MCF 10A (cell line): ENCODE measurements at regions of chr1 and their contacts with region 1.

Region 1: GRCh38 chr1:93814059-93814794 is 64.8 kb downstream of the DNTTIP2 start:
- DNase-seq: peak; percentile 90
- H3K4me3 Mint-ChIP-seq: no peak overlapping the region
- H3K27ac Mint-ChIP-seq: no peak overlapping the region
- H3K4me1 Mint-ChIP-seq: peaks cover 52% of the 10 kb centered on the region
- H3K27me3 Mint-ChIP-seq: no peaks in the 10 kb centered on the region
- CTCF ChIP-seq: peak; percentile 97

Region 2: GRCh38 chr1:93579891-93580290 is 234.3 kb before region 1 on chr1:
- CTCF ChIA-PET with region 1: interaction called, 10 read pairs
- POLR2A ChIA-PET with region 1: interaction called, 5 read pairs
- intact Hi-C with region 1: no loop called
- DNase-seq: peak; percentile 45
- H3K4me3 Mint-ChIP-seq: no peak overlapping the region
- H3K27ac Mint-ChIP-seq: peak overlapping the region; percentile 71
- H3K4me1 Mint-ChIP-seq: peaks cover 16% of the 10 kb centered on the region
- H3K27me3 Mint-ChIP-seq: no peaks in the 10 kb centered on the region
- CTCF ChIP-seq: no peak

Region 3: DNA sequence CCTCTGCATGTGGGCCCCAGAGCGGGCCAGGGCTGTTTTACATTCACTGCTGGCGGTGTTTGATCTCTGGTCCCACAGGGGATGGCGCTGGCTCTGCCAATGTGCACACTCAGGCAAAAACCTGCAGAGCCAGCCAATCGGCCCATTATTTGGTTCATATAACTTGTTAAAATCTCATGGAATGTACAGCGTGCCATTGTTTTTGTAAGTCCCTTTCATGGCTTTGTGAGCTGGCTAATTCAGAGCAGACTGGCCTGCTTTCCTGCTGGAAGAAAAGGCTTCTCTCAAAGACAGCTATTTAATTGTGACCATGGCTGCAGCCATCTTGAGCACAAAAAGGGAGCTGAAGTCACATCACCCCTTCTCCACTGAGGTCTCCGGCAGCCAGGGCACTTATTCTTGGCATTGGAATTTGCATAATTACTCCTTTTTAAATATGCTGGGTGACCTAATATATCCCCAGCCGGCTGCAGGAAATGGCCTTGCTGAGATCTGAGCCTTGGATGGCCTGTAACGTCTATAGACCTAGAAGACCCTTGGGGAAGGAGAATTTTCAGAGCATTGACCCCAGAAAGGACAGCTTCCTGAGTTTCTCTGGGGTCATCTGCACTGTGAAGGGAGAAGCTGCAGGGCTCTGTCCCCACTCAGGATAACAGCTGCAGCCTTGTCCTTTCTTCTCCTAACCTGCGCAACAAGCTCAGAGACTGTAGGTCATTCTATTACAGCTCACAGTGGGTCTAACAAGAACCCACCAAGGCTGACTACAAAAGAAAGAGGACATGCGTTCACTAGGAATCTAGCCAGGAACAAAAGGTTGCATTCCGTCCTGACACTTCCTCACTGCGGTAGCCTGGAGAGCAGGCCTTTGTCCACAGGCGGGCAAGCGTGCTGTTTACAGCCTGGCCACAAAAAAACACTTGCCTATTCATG is 178.3 kb before region 1 on chr1:
- CTCF ChIA-PET with region 1: interaction called, 250 read pairs
- POLR2A ChIA-PET with region 1: interaction called, 156 read pairs
- intact Hi-C with region 1: no loop called
- DNase-seq: no peak
- H3K4me3 Mint-ChIP-seq: no peak overlapping the region
- H3K27ac Mint-ChIP-seq: no peak overlapping the region
- H3K4me1 Mint-ChIP-seq: peaks cover 5% of the 10 kb centered on the region
- H3K27me3 Mint-ChIP-seq: no peaks in the 10 kb centered on the region
- CTCF ChIP-seq: no peak

Region 4: GRCh38 chr1:93686497-93687250 is 127.6 kb before region 1 on chr1:
- CTCF ChIA-PET with region 1: interaction called, 29 read pairs
- POLR2A ChIA-PET with region 1: interaction called, 62 read pairs
- intact Hi-C with region 1: loop called (anchors 1 kb)
- DNase-seq: no peak
- H3K4me3 Mint-ChIP-seq: no peak overlapping the region
- H3K27ac Mint-ChIP-seq: no peak overlapping the region
- H3K4me1 Mint-ChIP-seq: no peaks in the 10 kb centered on the region
- H3K27me3 Mint-ChIP-seq: no peaks in the 10 kb centered on the region
- CTCF ChIP-seq: no peak

Region 5: GRCh38 chr1:93749894-93750301 is 64.3 kb before region 1 on chr1:
- CTCF ChIA-PET with region 1: interaction called, 20 read pairs
- POLR2A ChIA-PET with region 1: interaction called, 9 read pairs
- intact Hi-C with region 1: loop called (anchors 10 kb)
- DNase-seq: no peak
- H3K4me3 Mint-ChIP-seq: no peak overlapping the region
- H3K27ac Mint-ChIP-seq: peak overlapping the region; percentile 71
- H3K4me1 Mint-ChIP-seq: peaks cover 56% of the 10 kb centered on the region
- H3K27me3 Mint-ChIP-seq: no peaks in the 10 kb centered on the region
- CTCF ChIP-seq: no peak

Region 6: GRCh38 chr1:94025383-94026340 is 211.4 kb after region 1 on chr1:
- CTCF ChIA-PET with region 1: no interaction called
- POLR2A ChIA-PET with region 1: no interaction called
- intact Hi-C with region 1: no loop called
- DNase-seq: peak; percentile 77
- H3K4me3 Mint-ChIP-seq: no peak overlapping the region
- H3K27ac Mint-ChIP-seq: peak overlapping the region; percentile 77
- H3K4me1 Mint-ChIP-seq: peaks cover 36% of the 10 kb centered on the region
- H3K27me3 Mint-ChIP-seq: no peaks in the 10 kb centered on the region
- CTCF ChIP-seq: peak; percentile 72